GM10248 (cell line): ENCODE measurements at regions of chr17 and their contacts with region 1.

Region 1: GRCh38 chr17:30477083-30477773 is at the start of gene GOSR1:
- DNase-seq: peak; percentile 92
- CTCF ChIP-seq: peak; percentile 85

Region 2: DNA sequence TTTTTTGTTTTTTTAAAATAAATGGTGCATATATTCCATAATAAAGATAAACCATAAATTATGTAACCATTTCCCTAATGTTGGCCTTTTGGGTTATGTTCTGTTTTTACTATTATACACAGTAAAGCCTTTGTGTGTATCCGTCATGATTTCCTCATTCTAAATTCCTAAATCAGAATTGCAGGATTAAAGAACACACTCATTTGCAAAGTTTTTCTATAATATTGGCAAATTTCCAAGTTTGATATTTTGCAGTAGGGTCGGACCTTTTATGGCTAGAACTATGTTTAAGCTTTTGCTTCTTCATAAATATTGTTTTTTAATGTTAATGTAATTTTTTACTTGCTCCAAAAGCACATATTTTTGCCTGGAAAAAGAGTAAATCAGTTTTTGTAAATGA is 16.6 kb after region 1 on chr17:
- CTCF ChIA-PET with region 1: interaction called, 19 read pairs
- POLR2A ChIA-PET with region 1: no interaction called
- DNase-seq: no peak
- CTCF ChIP-seq: no peak

Region 3: DNA sequence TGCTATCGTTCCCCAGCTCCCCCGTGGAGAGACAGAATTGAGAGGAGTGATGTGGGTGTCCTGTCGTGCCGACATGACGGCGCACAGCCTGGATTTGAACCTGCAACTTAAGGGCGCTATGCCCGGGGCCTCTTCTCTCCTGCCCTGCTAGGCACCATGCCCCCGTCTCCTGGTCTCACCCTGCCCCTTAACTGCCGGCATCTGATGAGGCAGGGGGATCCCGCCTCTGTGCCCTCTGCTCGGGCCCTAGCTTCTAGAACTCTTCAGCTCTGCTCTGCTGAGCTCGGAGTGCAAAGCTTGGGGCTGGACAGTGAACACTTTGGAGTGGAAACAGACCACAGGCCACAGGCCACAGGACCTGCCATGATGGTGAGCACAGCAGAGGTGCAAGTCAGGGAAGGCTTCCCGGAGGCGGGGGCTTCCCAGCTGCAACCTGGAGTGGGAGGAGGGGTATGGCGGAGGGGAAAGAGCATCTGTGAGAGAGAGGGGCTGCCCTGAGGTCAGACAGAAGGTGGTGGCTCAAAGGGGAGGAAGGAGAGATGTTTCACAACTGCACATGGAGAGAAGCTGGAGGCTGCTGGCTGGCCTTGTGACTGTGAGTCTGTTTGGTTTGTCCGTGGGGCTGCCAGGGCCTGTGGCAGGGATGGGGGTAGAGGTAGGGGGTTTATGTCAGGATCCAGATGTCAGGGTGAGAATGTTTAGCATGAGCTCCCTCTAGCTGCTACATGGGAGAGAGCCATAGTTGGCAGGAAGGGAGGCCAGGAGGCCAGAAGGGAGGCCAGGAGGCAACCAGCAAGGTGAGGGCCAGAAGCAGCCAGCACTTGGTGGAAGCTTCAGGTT is 239.5 kb after region 1 on chr17:
- CTCF ChIA-PET with region 1: interaction called, 14 read pairs
- POLR2A ChIA-PET with region 1: no interaction called
- DNase-seq: peak; percentile 11
- CTCF ChIP-seq: peak; percentile 40